ENCODE measurements at regions of chr12 and their contacts with region 1.

Region 1: DNA sequence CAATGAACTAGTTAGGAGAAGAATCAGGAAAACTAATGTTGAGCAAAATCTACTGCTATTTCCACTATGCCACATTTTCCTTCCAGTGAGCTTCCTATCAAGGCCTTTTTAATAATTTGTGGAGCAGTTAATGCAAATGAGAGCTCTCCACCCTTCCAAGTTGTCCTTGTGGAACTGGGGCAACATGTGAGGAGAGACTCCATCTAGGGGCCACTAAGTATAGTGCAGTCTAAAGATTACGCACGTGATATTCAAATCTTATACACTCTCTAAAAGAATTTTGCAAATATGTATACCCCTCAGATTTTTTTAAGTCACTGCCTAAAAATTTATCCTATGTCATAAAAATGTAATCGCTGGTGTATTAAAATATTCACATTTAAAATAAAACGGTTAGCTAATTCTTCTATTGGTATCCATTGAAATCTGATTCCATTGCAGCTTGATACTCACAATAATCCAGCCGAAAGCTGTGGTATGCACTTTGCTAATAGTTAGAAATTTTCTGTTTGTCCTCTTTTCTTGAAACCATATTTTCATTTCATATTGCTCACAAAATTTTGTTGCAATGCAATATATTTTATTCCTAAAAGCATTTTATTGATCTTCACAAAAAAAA is 100.1 kb downstream of the PAH start:
- DNase-seq: no peak
- H3K4me3 ChIP-seq: no peak overlapping the region
- H3K27ac ChIP-seq: no peak overlapping the region
- H3K4me1 ChIP-seq: peaks cover 0 to 3% (median 0%) of the 10 kb centered on the region in 4 experiments; a peak in 2 of 7 replicates
- H3K27me3 ChIP-seq: no peaks in the 10 kb centered on the region
- CTCF ChIP-seq: peak in 2 of 3 experiments; percentile 51 to 61; a peak in 3 of 4 replicates
- EP300 ChIP-seq: no peak
- POLR2A ChIP-seq: no peak
- RAD21 ChIP-seq: peak; percentile 53 to 62; a peak in 3 of 4 replicates

Region 2: DNA sequence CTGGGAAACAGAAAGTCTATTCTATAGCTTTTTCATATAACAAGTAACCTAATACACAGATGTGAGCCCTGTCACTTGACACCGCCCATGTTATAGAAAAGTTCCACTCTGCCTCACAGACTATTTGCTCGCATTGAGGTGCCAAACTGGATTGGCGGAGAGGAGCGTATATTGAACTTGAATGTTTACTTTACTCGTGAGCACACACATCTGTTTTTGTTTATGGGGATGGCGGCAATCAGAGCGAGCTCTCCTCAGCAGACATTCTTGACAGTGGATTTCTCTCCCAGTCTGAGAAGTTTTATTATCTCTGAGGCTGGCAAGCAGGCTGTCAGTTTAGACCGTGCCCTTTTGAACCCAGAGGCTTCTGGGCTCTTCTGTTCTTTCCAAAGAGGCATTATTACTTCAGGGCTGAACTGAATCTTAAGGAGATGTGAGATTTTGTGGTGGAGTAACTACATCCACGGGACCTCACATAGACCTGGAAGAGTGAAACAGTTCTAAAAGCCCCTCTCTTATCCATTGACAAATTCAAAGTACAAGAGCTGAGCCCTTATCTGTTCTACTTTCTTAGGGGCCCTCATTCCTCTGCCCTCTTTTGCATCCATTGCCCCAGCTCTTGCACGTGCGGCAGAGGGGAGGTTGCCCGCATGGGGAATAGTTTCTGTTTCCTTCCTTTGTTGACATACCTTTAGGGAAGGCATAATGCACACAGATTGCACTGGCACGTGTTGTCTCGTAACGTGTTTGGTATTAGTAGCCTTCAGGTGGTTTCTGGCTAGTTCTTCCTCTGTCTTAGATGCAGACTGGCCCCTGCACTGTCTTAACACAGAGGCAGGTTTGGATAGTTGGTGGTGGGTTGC is 871.3 kb before region 1 on chr12:
- CTCF ChIA-PET with region 1: interaction called, 24 read pairs
- POLR2A ChIA-PET with region 1: no interaction called
- DNase-seq: no peak
- H3K4me3 ChIP-seq: no peak overlapping the region
- H3K27ac ChIP-seq: no peak overlapping the region
- H3K4me1 ChIP-seq: no peaks in the 10 kb centered on the region
- H3K27me3 ChIP-seq: no peaks in the 10 kb centered on the region
- CTCF ChIP-seq: no peak
- EP300 ChIP-seq: no peak
- POLR2A ChIP-seq: no peak
- RAD21 ChIP-seq: no peak

Region 3: DNA sequence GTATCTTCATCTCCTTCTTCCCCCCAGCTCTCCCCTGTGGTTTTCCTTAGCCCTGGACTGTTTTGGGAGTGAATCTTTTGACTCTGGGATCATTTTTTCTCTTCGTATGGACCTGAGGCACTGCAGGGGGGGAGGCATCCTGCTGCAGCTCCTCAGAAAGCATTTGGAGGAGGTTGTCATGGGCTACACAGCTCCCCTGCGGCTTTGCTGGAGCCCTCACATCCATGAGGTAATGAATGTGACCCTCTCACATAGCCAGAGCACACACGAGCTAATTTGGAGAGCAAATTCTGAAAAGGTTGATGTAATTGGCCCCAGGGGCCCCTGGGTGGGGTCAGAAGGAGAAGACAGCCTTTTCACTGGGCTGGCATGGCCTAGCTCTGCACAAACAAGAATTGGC is 10.8 kb before region 1 on chr12:
- CTCF ChIA-PET with region 1: interaction called, 19 read pairs
- POLR2A ChIA-PET with region 1: no interaction called
- DNase-seq: no peak
- H3K4me3 ChIP-seq: no peak overlapping the region
- H3K27ac ChIP-seq: no peak overlapping the region
- H3K4me1 ChIP-seq: peaks cover 0 to 2% (median 1%) of the 10 kb centered on the region in 4 experiments; a peak in 2 of 7 replicates
- H3K27me3 ChIP-seq: no peaks in the 10 kb centered on the region
- CTCF ChIP-seq: no peak
- EP300 ChIP-seq: no peak
- POLR2A ChIP-seq: no peak
- RAD21 ChIP-seq: no peak

Region 4: GRCh38 chr12:102847131-102847530 is 30.2 kb after region 1 on chr12:
- CTCF ChIA-PET with region 1: interaction called, 16 read pairs
- POLR2A ChIA-PET with region 1: no interaction called
- DNase-seq: no peak
- H3K4me3 ChIP-seq: no peak overlapping the region
- H3K27ac ChIP-seq: no peak overlapping the region
- H3K4me1 ChIP-seq: no peaks in the 10 kb centered on the region
- H3K27me3 ChIP-seq: no peaks in the 10 kb centered on the region
- CTCF ChIP-seq: no peak
- EP300 ChIP-seq: no peak
- POLR2A ChIP-seq: no peak
- RAD21 ChIP-seq: no peak